OCI-LY7 (cell line): ENCODE measurements at regions of chr9 and their contacts with region 1.

Region 1: GRCh38 chr9:37465249-37466036 is at the start of gene ZBTB5:
- DNase-seq: peak; percentile 100
- H3K4me3 ChIP-seq: peak within 1 kb of the TSS; percentile 89
- H3K27ac ChIP-seq: peak within 1 kb of the TSS; percentile 74
- H3K4me1 ChIP-seq: peaks cover 38% of the 10 kb centered on the region
- CTCF ChIP-seq: no peak
- total RNA-seq, gene ZBTB5: 27.9 and 31.9 TPM in 2 replicates

Region 2: GRCh38 chr9:36572515-36573418 is 892.7 kb before region 1 on chr9 and contains the start of gene MELK:
- CTCF ChIA-PET with region 1: no interaction called
- POLR2A ChIA-PET with region 1: no interaction called
- intact Hi-C with region 1: loop called (anchors 10 kb)
- DNase-seq: peak; percentile 90
- H3K4me3 ChIP-seq: peak within 1 kb of the TSS; percentile 94
- H3K27ac ChIP-seq: peak within 1 kb of the TSS; percentile 58
- H3K4me1 ChIP-seq: peaks cover 53% of the 10 kb centered on the region
- CTCF ChIP-seq: no peak
- total RNA-seq, gene MELK: 47.9 and 48.9 TPM in 2 replicates

Region 3: GRCh38 chr9:37422289-37423104 is 42.9 kb before region 1 on chr9 and contains the start of gene GRHPR:
- CTCF ChIA-PET with region 1: no interaction called
- POLR2A ChIA-PET with region 1: interaction called, 7 read pairs
- intact Hi-C with region 1: loop called (anchors 2 kb)
- DNase-seq: peak; percentile 85
- H3K4me3 ChIP-seq: peak within 1 kb of the TSS; percentile 82
- H3K27ac ChIP-seq: peak within 1 kb of the TSS; percentile 55
- H3K4me1 ChIP-seq: peaks cover 55% of the 10 kb centered on the region
- CTCF ChIP-seq: no peak
- total RNA-seq, gene GRHPR: 135 and 148 TPM in 2 replicates

Region 4: GRCh38 chr9:37566716-37567115 is 101.3 kb after region 1 on chr9:
- CTCF ChIA-PET with region 1: no interaction called
- POLR2A ChIA-PET with region 1: no interaction called
- intact Hi-C with region 1: no loop called
- DNase-seq: no peak
- H3K4me3 ChIP-seq: no peak overlapping the region
- H3K27ac ChIP-seq: no peak overlapping the region
- H3K4me1 ChIP-seq: peaks cover 22% of the 10 kb centered on the region
- CTCF ChIP-seq: no peak